ENCODE measurements at regions of chr17 and their contacts with region 1.

Region 1: GRCh38 chr17:80036715-80037477 is 454 bp downstream of the CCDC40 start:
- DNase-seq: no peak
- ATAC-seq: peak; percentile 19
- H3K4me3 ChIP-seq: peak overlapping the region; percentile 79
- H3K27ac ChIP-seq: peak overlapping the region; percentile 20; the same call in 1 of the 2 replicates
- H3K4me1 ChIP-seq: no peaks in the 10 kb centered on the region; the same call in 1 of the 2 replicates
- H3K27me3 ChIP-seq: no peaks in the 10 kb centered on the region
- CTCF ChIP-seq: no peak
- POLR2A ChIP-seq: peak; percentile 17; the same call in 1 of the 2 replicates
- RAD21 ChIP-seq: no peak

Region 2: GRCh38 chr17:80068301-80069222 is 31.7 kb after region 1 on chr17:
- CTCF ChIA-PET with region 1: no interaction called
- POLR2A ChIA-PET with region 1: no interaction called
- dilution Hi-C with region 1: no loop called
- in situ Hi-C with region 1: no loop called
- intact Hi-C with region 1: loop called (anchors 1 kb)
- DNase-seq: peak; percentile 89
- ATAC-seq: peak; percentile 83
- H3K4me3 ChIP-seq: no peak overlapping the region
- H3K27ac ChIP-seq: peak overlapping the region; percentile 83
- H3K4me1 ChIP-seq: peaks cover 25% of the 10 kb centered on the region
- H3K27me3 ChIP-seq: no peaks in the 10 kb centered on the region
- CTCF ChIP-seq: no peak; the same call in 1 of the 2 replicates
- POLR2A ChIP-seq: no peak
- RAD21 ChIP-seq: no peak

Measured in IMR-90 (cell line).